ENCODE measurements at regions of chr12 and their contacts with region 1.

Region 1: GRCh38 chr12:19031032-19031431 is 98.5 kb upstream of the PLEKHA5 start:
- DNase-seq: peak; percentile 69
- H3K4me3 Mint-ChIP-seq: peak overlapping the region; percentile 52
- H3K27ac Mint-ChIP-seq: peak overlapping the region; percentile 95
- H3K4me1 Mint-ChIP-seq: peaks cover 29% of the 10 kb centered on the region
- H3K27me3 Mint-ChIP-seq: no peaks in the 10 kb centered on the region
- CTCF ChIP-seq: no peak

Region 2: DNA sequence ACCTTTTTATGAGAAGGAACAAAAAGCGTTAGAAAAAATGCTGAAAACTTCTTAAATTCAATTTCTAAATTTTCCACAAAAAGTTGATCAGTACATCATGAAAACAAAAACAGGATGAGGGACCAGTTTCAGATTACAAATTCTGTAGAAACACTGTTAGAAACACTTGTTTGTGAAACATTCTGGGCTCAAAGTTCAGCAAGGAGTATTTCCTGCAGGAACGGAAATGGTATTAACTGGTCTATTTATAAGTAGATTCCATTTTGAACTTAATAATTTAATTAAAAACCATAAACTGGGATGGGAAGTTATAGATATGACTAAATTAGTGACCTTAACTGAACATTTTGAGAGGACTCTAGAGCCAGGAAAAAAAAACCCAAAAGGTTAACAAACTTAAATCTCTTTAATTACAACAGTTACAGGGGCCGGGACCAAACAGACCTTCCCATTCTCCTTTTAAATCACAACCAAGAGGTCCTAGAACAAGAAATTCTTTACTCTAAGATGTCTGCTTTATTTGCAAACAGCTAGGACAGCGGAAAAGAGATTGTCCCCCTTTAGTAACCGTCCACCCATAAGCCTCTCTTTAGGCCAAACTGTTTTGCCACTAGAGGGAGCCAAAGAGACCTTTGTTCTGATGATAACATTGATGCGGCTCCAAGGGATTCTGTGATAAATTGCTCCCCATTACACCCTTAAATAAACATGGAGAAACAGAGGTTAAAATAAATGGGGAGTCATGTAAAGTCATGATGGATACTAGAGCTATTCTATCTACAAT is 872.1 kb before region 1 on chr12:
- CTCF ChIA-PET with region 1: no interaction called
- POLR2A ChIA-PET with region 1: no interaction called
- intact Hi-C with region 1: no loop called
- DNase-seq: peak; percentile 60
- H3K4me3 Mint-ChIP-seq: no peak overlapping the region
- H3K27ac Mint-ChIP-seq: no peak overlapping the region
- H3K4me1 Mint-ChIP-seq: no peaks in the 10 kb centered on the region
- H3K27me3 Mint-ChIP-seq: no peaks in the 10 kb centered on the region
- CTCF ChIP-seq: peak; percentile 51

Region 3: DNA sequence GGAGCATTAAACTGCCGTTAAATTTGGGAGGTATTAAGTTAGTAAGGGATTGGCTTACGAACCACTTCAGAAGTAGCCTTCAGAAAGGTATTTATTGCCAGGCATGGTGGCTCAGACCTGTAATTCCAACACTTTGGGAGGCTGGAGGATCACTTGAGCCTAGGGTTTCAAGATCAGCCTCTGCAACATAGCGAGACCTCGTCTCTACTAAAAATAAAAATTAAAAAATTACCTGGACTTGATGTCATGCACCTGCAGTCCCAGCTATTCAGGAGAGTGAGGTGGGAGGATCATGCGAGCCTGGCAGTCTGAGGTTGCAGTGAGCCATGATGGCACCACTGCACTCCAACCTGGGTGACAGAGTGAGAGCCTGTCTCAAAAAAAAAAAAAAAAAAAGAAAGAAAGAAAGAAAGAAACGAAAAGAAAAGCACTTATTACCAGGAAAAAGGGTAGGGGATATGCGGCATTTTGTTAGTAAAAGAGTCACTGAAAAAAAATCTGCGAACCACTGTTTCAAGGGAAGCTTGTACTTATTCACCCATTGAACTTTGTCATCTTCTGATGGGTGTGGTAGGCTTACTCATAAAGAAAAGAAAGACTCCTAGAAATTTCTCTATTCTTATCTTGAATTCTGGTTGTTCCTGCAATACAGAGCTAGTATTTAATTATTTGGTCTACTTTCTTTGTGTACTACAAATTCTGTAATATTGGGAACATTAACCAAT is 64.9 kb after region 1 on chr12:
- CTCF ChIA-PET with region 1: interaction called, 3 read pairs
- POLR2A ChIA-PET with region 1: interaction called, 20 read pairs
- intact Hi-C with region 1: loop called (anchors 5 kb)
- DNase-seq: peak; percentile 42
- H3K4me3 Mint-ChIP-seq: peak overlapping the region; percentile 20
- H3K27ac Mint-ChIP-seq: peak overlapping the region; percentile 90
- H3K4me1 Mint-ChIP-seq: peaks cover 14% of the 10 kb centered on the region
- H3K27me3 Mint-ChIP-seq: no peaks in the 10 kb centered on the region
- CTCF ChIP-seq: no peak